HepG2 (cell line): ENCODE measurements at regions of chr3 and their contacts with region 1.

Region 1: GRCh38 chr3:126134219-126134975 is 46.0 kb downstream of the ALDH1L1 start:
- DNase-seq: peak; percentile 31
- ATAC-seq: peak; percentile 79
- H3K4me3 ChIP-seq: no peak overlapping the region
- H3K27ac ChIP-seq: no peak overlapping the region
- H3K4me1 ChIP-seq: no peaks in the 10 kb centered on the region
- H3K27me3 ChIP-seq: no peaks in the 10 kb centered on the region
- CTCF ChIP-seq: peak; percentile 92
- EP300 ChIP-seq: no peak
- POLR2A ChIP-seq: no peak
- RAD21 ChIP-seq: peak; percentile 94

Region 2: GRCh38 chr3:126197854-126198584 is 63.6 kb after region 1 on chr3:
- CTCF ChIA-PET with region 1: interaction called, 27 read pairs
- POLR2A ChIA-PET with region 1: interaction called, 3 read pairs
- in situ Hi-C with region 1: loop called (anchors 10 kb)
- intact Hi-C with region 1: loop called (anchors 1 kb)
- DNase-seq: peak; percentile 62
- ATAC-seq: peak; percentile 99
- H3K4me3 ChIP-seq: no peak overlapping the region
- H3K27ac ChIP-seq: peak overlapping the region; percentile 26
- H3K4me1 ChIP-seq: no peaks in the 10 kb centered on the region
- H3K27me3 ChIP-seq: no peaks in the 10 kb centered on the region
- CTCF ChIP-seq: peak; percentile 91
- EP300 ChIP-seq: no peak
- POLR2A ChIP-seq: no peak
- RAD21 ChIP-seq: peak; percentile 61

Region 3: DNA sequence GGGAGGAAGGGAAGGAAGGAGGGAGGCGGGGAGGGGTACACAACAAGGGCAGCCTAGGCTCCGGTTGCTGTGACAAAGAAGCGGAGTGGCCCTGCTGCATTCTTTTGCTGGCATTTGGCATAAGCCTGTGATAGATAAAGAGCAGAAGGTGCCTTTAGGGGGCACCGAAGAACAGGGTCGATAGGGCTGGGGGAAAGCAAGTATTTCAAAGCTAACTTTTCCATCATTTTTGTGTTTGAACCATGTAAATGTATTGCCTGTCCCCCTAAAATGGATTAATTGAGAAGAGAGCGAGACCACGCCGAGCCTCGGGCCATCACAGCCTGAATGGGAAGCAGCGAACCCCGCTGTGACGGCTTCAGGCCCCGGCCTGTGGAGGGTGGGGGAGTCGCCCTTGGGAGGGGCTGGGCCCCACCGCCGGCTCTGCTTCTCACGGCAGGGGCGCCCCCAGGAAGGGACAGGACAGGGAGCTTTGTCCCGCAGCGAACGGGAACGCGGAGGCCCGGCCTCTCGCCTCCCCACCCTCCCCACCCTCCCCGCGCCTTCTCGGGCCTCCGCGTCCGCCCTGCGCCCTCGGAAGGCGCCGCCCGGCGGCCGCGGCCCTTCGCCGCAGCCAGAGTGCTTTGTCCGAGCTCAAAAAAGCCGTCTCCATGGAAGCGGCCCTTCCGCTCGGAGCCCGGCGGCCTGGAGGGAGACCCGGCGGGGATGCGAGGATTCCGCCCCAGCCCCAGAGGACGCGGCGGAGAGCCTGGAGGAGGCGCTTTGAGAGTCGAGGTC is 78.4 kb after region 1 on chr3:
- CTCF ChIA-PET with region 1: interaction called, 25 read pairs
- POLR2A ChIA-PET with region 1: no interaction called
- in situ Hi-C with region 1: no loop called
- intact Hi-C with region 1: loop called (anchors 1 kb)
- DNase-seq: peak; percentile 29
- ATAC-seq: peak; percentile 91
- H3K4me3 ChIP-seq: peak overlapping the region; percentile 64 to 72 (median 68)
- H3K27ac ChIP-seq: no peak overlapping the region
- H3K4me1 ChIP-seq: peaks cover 37% of the 10 kb centered on the region
- H3K27me3 ChIP-seq: peaks cover 2 to 43% of the 10 kb centered on the region in 2 experiments; a peak in 3 of 5 replicates
- CTCF ChIP-seq: peak; percentile 70
- EP300 ChIP-seq: no peak
- POLR2A ChIP-seq: no peak
- RAD21 ChIP-seq: peak; percentile 77

Region 4: DNA sequence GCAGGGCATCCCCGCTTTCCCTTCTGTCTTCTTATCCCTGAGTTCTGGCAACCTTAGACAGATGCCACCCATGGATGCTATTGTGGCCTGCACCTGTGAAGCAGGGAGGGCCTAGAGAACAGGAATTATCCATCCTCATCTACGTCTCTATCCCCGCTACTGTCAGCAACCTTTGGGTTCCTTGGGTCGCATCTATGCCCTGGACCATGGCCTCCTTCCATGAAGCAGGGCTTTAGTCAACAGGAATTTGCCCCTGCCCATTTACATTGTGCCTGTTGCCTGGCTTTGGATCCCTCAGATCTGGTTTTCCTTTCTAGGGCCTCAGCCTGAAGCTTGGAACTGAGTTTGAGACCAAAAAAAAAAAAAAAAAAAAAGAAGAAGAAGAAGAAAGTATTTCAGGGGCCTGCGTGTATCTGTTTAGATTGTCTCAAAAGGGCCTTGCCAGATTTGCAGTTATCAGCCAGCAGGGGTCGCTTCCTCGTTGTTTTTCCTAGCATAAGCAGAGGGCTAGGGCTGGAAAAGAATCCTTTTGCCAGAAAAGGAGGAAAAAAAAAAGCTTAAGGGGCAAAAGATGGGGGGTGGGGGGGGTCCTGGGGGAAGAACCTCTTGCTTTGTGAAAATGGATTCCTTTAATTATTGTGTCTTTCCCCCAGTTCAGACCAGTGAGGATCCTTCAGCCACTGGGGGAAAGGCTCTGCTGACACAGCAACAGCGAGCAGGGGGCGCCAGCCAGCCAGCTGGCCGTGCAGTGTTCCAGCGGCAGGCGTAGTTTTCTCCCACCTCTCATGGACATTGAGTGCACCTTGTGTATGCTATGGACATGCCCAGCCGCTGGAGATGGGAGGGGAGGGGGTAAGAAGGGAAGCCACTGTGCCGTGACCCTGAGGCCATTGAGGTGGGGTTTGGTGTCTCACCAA is 111.7 kb after region 1 on chr3:
- CTCF ChIA-PET with region 1: interaction called, 4 read pairs
- POLR2A ChIA-PET with region 1: no interaction called
- in situ Hi-C with region 1: no loop called
- intact Hi-C with region 1: loop called (anchors 1 kb)
- DNase-seq: peak; percentile 48
- ATAC-seq: peak; percentile 98
- H3K4me3 ChIP-seq: peak overlapping the region in 1 of 3 experiments; percentile 4; a peak in 1 of 6 replicates
- H3K27ac ChIP-seq: no peak overlapping the region
- H3K4me1 ChIP-seq: peaks cover 6% of the 10 kb centered on the region; the same call in 1 of the 2 replicates
- H3K27me3 ChIP-seq: peaks cover 0 to 3% of the 10 kb centered on the region in 2 experiments; a peak in 1 of 5 replicates
- CTCF ChIP-seq: peak; percentile 77
- EP300 ChIP-seq: no peak
- POLR2A ChIP-seq: no peak
- RAD21 ChIP-seq: 0 out of 2 replicates have a peak, but pooled peaks have one; percentile 19

Region 5: DNA sequence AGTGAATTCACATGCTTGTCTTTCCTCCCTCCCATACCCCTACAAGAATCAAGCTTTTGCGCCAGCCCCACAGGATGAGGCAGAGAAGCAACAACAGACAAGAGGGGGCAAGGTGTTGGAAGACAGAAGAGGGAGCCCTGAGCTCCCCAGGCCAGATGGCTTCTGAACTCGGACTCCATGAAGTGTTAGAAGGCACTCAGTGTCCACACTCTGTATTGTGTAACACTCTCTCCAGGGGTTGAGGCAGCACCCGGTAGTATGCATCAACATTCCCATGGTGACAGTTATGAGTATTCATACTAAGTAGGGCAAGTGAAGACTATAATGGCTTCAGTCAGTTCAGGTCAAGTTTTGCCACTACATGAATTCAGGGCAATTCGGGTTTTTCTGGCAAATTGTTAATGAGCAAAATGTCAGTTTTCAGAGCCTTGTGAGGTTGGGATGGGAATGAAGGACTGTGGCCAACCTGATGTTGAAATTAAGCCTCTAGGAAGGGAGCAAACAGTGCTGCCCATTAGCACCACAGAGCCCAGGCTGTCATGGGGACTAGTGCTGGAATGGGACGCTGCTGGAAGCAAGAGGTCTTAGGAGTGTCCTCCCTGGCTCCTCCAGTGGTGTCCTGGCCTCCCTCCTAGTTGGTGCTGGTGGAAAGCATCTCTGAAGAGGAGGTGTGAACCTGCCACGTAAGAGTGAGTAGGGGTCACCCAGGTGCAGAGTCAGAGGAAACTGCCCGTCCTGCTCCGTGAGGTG is 143.4 kb after region 1 on chr3:
- CTCF ChIA-PET with region 1: no interaction called
- POLR2A ChIA-PET with region 1: no interaction called
- in situ Hi-C with region 1: no loop called
- intact Hi-C with region 1: no loop called
- DNase-seq: no peak
- ATAC-seq: peak; percentile 74
- H3K4me3 ChIP-seq: no peak overlapping the region
- H3K27ac ChIP-seq: no peak overlapping the region
- H3K4me1 ChIP-seq: peaks cover 11% of the 10 kb centered on the region; the same call in 1 of the 2 replicates
- H3K27me3 ChIP-seq: peaks cover 0 to 19% of the 10 kb centered on the region in 2 experiments; a peak in 2 of 5 replicates
- CTCF ChIP-seq: no peak
- EP300 ChIP-seq: no peak
- POLR2A ChIP-seq: no peak
- RAD21 ChIP-seq: no peak

Region 6: GRCh38 chr3:126357295-126358037 is 223.1 kb after region 1 on chr3 and contains the start of gene KLF15:
- CTCF ChIA-PET with region 1: no interaction called
- POLR2A ChIA-PET with region 1: no interaction called
- in situ Hi-C with region 1: loop called (anchors 25 kb)
- intact Hi-C with region 1: no loop called
- DNase-seq: peak; percentile 65
- ATAC-seq: peak; percentile 41
- H3K4me3 ChIP-seq: peak within 1 kb of the TSS; percentile 61 to 80 (median 71)
- H3K27ac ChIP-seq: peak within 1 kb of the TSS; percentile 75
- H3K4me1 ChIP-seq: peaks cover 43% of the 10 kb centered on the region
- H3K27me3 ChIP-seq: peaks cover 7 to 36% of the 10 kb centered on the region in 2 experiments; a peak in 4 of 5 replicates
- CTCF ChIP-seq: no peak
- EP300 ChIP-seq: no peak
- POLR2A ChIP-seq: peak in 1 of 2 experiments; percentile 52; a peak in 2 of 4 replicates
- RAD21 ChIP-seq: no peak
- total RNA-seq, gene KLF15: 5.4 and 7.8 TPM in 2 replicates

Region 7: GRCh38 chr3:126389112-126389793 is 254.9 kb after region 1 on chr3:
- CTCF ChIA-PET with region 1: interaction called, 16 read pairs
- POLR2A ChIA-PET with region 1: no interaction called
- in situ Hi-C with region 1: no loop called
- intact Hi-C with region 1: loop called (anchors 1 kb)
- DNase-seq: peak; percentile 93
- ATAC-seq: peak; percentile 96
- H3K4me3 ChIP-seq: peak overlapping the region; percentile 21 to 61 (median 41); a peak in 3 of 6 replicates
- H3K27ac ChIP-seq: no peak overlapping the region
- H3K4me1 ChIP-seq: peaks cover 13% of the 10 kb centered on the region
- H3K27me3 ChIP-seq: peaks cover 0 to 11% of the 10 kb centered on the region in 2 experiments; a peak in 1 of 5 replicates
- CTCF ChIP-seq: peak; percentile 97
- EP300 ChIP-seq: 0 out of 4 replicates have a peak, but pooled peaks of 1 of the 2 experiments have one; percentile 17
- POLR2A ChIP-seq: no peak
- RAD21 ChIP-seq: peak; percentile 100